ENCODE measurements at regions of chr3 and their contacts with region 1.

Region 1: DNA sequence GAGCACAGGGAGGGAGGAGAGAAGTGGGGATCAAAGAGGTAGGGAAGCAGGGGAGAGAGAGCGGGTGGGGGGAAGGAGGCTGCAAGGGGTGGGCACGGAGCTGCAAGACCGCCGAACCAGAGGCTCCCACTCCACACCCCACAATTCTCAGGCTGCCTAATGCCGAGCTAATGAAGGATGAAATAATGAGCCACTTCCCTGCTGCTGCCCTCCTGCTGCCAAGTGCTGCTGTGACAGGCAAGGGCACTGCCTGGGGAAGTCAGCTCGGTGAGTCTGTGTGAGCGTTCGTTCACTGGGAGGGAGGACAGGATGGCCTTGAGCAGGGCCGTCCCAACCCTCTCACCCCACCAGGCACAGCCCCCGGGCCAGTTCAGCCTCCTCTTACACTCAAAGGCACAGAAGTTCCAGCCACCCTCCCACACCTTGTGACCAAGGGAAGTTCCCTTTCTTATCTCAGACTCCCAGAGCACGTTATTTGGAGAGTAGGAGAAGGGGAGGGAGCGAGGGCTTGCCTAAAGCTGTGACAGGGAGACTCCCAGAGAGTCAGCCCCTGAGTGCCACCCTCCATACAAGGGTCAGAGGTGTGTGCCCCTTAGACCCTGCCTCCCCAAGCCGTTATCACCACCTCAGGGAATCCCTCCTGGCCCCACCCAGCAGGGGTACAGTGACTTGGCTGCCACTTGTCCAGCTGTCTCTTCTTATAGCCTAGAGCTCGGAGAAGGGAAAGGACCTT is 12.4 kb downstream of the GLYCTK start:
- DNase-seq: no peak
- ATAC-seq: peak in 1 of 4 donors; percentile 27
- H3K4me3 ChIP-seq: no peak overlapping the region
- H3K27ac ChIP-seq: no peak overlapping the region
- H3K4me1 ChIP-seq: no peaks in the 10 kb centered on the region
- H3K27me3 ChIP-seq: no peaks in the 10 kb centered on the region
- CTCF ChIP-seq: no peak

Region 2: GRCh38 chr3:52123106-52123725 is 176.8 kb before region 1 on chr3:
- intact Hi-C with region 1: no loop called
- DNase-seq: peak; percentile 67 to 84
- ATAC-seq: peak; percentile 89 to 96 (median 92)
- H3K4me3 ChIP-seq: no peak overlapping the region
- H3K27ac ChIP-seq: no peak overlapping the region
- H3K4me1 ChIP-seq: no peaks in the 10 kb centered on the region
- H3K27me3 ChIP-seq: no peaks in the 10 kb centered on the region
- CTCF ChIP-seq: peak; percentile 94

Region 3: GRCh38 chr3:52333869-52334557 is 34.0 kb after region 1 on chr3:
- intact Hi-C with region 1: loop called in 1 of 2 experiments (anchors 5 kb)
- DNase-seq: peak in 1 of 2 donors; percentile 4
- ATAC-seq: no peak
- H3K4me3 ChIP-seq: no peak overlapping the region
- H3K27ac ChIP-seq: no peak overlapping the region
- H3K4me1 ChIP-seq: no peaks in the 10 kb centered on the region
- H3K27me3 ChIP-seq: no peaks in the 10 kb centered on the region
- CTCF ChIP-seq: no peak

Region 4: DNA sequence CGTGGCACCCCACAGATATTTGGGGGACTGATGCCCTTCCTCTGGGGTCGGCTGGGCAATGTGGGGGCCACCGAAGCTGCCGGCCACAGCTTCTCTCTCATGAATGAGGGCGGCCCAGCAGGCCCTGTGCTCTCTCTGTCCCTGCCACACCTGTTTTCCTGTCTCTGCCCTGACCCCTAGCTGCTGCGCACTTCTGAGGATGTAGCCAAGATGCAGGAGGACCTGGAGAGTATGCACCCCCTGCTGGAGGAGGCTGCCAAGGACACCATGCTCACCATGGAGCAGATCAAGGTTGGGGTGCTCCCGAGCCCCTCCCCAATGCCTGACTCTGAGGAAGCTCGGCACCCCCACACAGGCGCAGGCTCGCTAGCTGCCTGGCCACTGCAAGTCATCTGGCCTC is 85.1 kb after region 1 on chr3:
- intact Hi-C with region 1: loop called in 1 of 2 experiments (anchors 5 kb)
- DNase-seq: no peak
- ATAC-seq: peak in 3 of 4 donors; percentile 21 to 35 (median 26)
- H3K4me3 ChIP-seq: no peak overlapping the region
- H3K27ac ChIP-seq: no peak overlapping the region
- H3K4me1 ChIP-seq: no peaks in the 10 kb centered on the region
- H3K27me3 ChIP-seq: no peaks in the 10 kb centered on the region
- CTCF ChIP-seq: peak; percentile 12